Kidney (tissue), 22 donors: ENCODE measurements at regions of chr18 and their contacts with region 1.

Region 1: GRCh38 chr18:12933327-12933726 is 14.5 kb upstream of the SEH1L start:
- DNase-seq: no peak
- H3K4me3 ChIP-seq: no peak overlapping the region
- H3K27ac ChIP-seq: no peak overlapping the region
- H3K4me1 ChIP-seq: no peaks in the 10 kb centered on the region
- H3K27me3 ChIP-seq: no peaks in the 10 kb centered on the region
- CTCF ChIP-seq: no peak

Region 2: GRCh38 chr18:12726774-12727550 is 206.4 kb before region 1 on chr18:
- intact Hi-C with region 1: loop called (anchors 2 kb)
- DNase-seq: peak in 4 of 5 donors; percentile 74 to 80 (median 77)
- H3K4me3 ChIP-seq: no peak overlapping the region
- H3K27ac ChIP-seq: no peak overlapping the region
- H3K4me1 ChIP-seq: no peaks in the 10 kb centered on the region
- H3K27me3 ChIP-seq: no peaks in the 10 kb centered on the region
- CTCF ChIP-seq: peak; percentile 92